ENCODE measurements at regions of chr7 and their contacts with region 1.

Region 1: DNA sequence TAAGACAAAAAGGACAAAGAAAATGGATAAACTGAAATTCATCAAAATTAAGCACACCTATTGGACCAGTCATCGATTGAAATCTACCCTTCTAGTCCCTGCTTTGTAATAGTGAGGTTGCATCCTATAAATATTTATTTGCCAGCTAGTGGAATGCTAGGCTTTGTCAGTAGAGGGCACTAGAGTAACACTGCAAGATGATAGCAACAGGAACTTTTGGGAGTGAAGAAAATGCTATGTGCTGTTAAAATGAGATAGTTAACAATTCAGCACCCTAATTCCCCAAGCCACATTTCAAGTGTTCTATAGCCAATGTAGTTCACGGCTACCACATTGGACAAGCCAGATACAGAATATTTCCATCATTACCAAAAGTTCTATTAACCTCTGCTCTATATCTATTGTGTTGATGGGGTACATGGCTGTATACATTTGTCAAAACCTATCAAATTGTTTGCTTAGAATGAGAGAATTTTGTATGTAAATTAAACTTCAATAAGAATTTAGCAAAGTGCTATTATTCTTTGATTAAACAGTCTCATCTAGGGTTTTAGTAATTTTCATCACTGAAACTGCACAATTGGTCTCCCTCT is 69.8 kb downstream of the LSMEM1 start:
- DNase-seq: peak; percentile 71
- ATAC-seq: peak; percentile 87
- H3K4me3 ChIP-seq: no peak overlapping the region
- H3K27ac ChIP-seq: no peak overlapping the region
- H3K4me1 ChIP-seq: no peaks in the 10 kb centered on the region
- H3K27me3 ChIP-seq: no peaks in the 10 kb centered on the region; the same call in 1 of the 2 replicates
- CTCF ChIP-seq: peak; percentile 94
- POLR2A ChIP-seq: 0 out of 2 replicates have a peak, but pooled peaks have one; percentile 39
- RAD21 ChIP-seq: peak; percentile 96

Region 2: GRCh38 chr7:111741811-111742240 is 808.7 kb before region 1 on chr7:
- CTCF ChIA-PET with region 1: no interaction called
- POLR2A ChIA-PET with region 1: no interaction called
- dilution Hi-C with region 1: no loop called
- in situ Hi-C with region 1: no loop called
- intact Hi-C with region 1: loop called (anchors 5 kb)
- DNase-seq: peak; percentile 76
- ATAC-seq: peak; percentile 89
- H3K4me3 ChIP-seq: no peak overlapping the region
- H3K27ac ChIP-seq: no peak overlapping the region
- H3K4me1 ChIP-seq: peaks cover 2% of the 10 kb centered on the region; the same call in 1 of the 2 replicates
- H3K27me3 ChIP-seq: no peaks in the 10 kb centered on the region
- CTCF ChIP-seq: peak; percentile 80
- POLR2A ChIP-seq: no peak
- RAD21 ChIP-seq: peak; percentile 83

Region 3: DNA sequence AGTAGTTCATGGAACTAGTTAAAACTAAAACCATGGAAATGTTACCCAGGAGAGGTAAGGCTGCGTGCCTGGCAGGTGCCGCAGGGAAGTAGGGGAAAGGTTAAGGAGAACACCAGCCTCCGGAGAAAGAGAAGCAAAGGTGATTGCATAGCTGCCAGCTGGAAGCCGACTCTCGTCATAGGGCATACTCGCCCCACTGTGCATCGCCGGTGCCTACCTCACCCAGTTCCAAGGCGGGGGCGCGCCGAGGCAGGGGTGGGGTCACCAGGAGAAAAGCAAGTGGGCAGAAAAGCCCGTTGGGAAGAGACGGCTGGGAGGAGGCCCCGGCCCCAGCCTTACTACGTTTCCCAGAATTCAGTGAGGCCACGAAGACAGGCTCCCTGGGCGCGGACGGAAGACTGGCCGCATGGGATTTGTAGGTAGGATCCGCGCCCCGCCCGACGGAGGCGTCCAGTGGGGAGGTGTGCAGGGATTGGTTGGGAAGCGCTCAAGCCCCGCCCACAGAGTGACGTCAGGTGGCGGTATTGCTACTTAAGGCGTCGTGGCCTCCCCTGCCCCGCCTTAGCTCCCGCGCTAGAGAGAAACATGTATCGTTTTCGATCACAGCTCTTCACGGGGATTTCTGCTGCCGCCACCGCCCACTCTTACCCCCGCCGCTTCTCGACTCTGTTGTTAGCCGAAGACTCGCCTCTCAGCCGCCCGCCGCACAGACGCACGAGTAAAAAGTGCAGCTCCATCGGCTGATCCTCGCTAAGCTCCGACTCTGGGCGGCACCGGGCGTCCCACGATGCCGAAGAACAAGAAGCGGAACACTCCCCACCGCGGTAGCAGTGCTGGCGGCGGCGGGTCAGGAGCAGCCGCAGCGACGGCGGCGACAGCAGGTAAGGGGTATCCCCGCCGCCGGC is 100.4 kb before region 1 on chr7 and contains the start of gene IFRD1:
- CTCF ChIA-PET with region 1: no interaction called
- POLR2A ChIA-PET with region 1: no interaction called
- dilution Hi-C with region 1: no loop called
- in situ Hi-C with region 1: no loop called
- intact Hi-C with region 1: no loop called
- DNase-seq: peak; percentile 98
- ATAC-seq: peak; percentile 90
- H3K4me3 ChIP-seq: peak within 1 kb of the TSS; percentile 85
- H3K27ac ChIP-seq: peak within 1 kb of the TSS; percentile 94
- H3K4me1 ChIP-seq: no peaks in the 10 kb centered on the region; the same call in 1 of the 2 replicates
- H3K27me3 ChIP-seq: no peaks in the 10 kb centered on the region
- CTCF ChIP-seq: no peak
- POLR2A ChIP-seq: peak; percentile 100
- RAD21 ChIP-seq: no peak
- total RNA-seq, gene IFRD1: 18.3 and 24.2 TPM in 2 replicates

Region 4: DNA sequence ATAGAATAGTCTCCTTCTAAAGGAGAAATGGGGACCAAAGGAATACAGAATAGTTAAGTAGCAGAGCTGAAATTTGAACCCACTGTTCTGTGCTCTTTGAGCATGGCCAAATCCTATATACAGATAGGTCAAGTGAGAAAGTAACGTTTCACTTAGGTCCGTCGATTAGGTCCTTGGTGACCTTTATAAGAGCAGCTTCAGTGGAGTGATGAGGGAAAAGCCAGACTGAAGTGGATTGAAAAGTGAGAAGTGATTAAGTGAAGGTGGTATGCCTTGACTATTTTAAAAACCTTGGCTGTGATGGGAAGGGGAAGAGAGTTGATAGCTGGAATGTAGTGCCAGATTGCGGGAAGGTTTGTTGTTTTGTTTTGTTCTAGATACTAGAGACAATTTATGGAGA is 80.4 kb before region 1 on chr7:
- CTCF ChIA-PET with region 1: no interaction called
- POLR2A ChIA-PET with region 1: no interaction called
- dilution Hi-C with region 1: no loop called
- in situ Hi-C with region 1: no loop called
- intact Hi-C with region 1: no loop called
- DNase-seq: no peak
- ATAC-seq: no peak
- H3K4me3 ChIP-seq: no peak overlapping the region
- H3K27ac ChIP-seq: no peak overlapping the region
- H3K4me1 ChIP-seq: no peaks in the 10 kb centered on the region; the same call in 1 of the 2 replicates
- H3K27me3 ChIP-seq: no peaks in the 10 kb centered on the region
- CTCF ChIP-seq: no peak
- POLR2A ChIP-seq: no peak
- RAD21 ChIP-seq: no peak

Region 5: DNA sequence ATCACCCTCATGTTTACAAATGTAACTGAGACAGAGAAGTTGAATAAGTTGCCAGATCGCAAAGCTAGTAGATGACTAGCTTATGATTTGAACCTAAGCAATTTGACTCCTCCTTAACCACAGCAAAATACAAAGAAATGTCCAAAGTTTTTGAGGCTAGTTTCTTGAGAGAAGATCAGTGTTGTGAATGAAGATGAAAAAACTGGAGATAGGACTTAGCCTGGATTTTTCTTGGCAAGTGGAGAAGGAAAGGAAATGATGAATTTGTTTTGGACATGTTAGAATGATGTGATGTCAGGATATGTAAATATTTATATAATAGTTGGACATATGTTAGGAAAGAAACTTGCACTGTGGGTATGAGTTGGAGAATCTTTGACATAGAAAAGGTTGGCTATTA is 80.0 kb after region 1 on chr7:
- CTCF ChIA-PET with region 1: no interaction called
- POLR2A ChIA-PET with region 1: no interaction called
- dilution Hi-C with region 1: no loop called
- in situ Hi-C with region 1: no loop called
- intact Hi-C with region 1: no loop called
- DNase-seq: peak; percentile 27
- ATAC-seq: peak; percentile 62
- H3K4me3 ChIP-seq: no peak overlapping the region
- H3K27ac ChIP-seq: no peak overlapping the region
- H3K4me1 ChIP-seq: no peaks in the 10 kb centered on the region
- H3K27me3 ChIP-seq: no peaks in the 10 kb centered on the region
- CTCF ChIP-seq: no peak
- POLR2A ChIP-seq: no peak
- RAD21 ChIP-seq: no peak

Region 6: DNA sequence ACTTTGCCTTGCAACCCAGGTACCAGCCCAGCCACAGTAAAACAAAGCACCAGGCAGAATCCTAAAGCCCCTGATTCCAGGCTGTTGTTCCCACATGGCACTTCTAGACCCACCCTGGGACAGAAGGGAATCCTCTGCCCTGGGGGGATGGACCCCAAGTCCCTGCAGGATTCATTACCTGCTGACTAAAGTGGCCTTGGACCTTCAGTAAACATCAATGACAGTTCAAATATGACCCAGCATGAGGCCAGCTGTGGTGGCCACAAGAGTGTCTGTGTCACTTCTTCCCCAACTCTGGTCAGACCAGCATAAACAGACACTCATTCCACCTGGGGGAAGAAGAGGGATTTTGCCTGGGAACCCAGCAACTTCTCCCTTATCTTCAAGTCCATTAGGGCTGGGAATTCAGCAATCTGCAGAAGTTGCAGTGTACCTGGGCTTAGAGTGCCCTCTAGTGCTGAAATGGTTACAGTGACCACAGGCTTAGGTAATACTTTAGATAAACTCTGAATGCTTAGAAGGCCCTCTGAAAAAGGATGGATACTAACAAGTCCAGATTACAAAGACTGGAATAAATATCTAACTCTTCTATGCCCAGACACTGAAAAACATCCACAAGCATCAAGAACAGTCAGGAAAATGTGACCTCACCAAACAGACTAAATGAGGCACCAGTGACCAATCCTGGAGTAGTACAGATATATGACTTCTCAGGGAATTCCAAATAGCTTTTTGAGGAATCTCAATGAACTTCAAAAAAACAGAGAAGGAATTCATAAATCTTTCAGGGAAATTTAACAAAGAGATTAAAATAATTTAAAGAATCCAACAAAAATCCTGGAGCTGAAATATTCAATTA is 348.1 kb after region 1 on chr7:
- CTCF ChIA-PET with region 1: interaction called, 3 read pairs
- POLR2A ChIA-PET with region 1: no interaction called
- dilution Hi-C with region 1: no loop called
- in situ Hi-C with region 1: loop called (anchors 10 kb)
- intact Hi-C with region 1: loop called (anchors 1 kb)
- DNase-seq: peak; percentile 76
- ATAC-seq: peak; percentile 96
- H3K4me3 ChIP-seq: no peak overlapping the region
- H3K27ac ChIP-seq: no peak overlapping the region
- H3K4me1 ChIP-seq: no peaks in the 10 kb centered on the region
- H3K27me3 ChIP-seq: no peaks in the 10 kb centered on the region
- CTCF ChIP-seq: peak; percentile 88
- POLR2A ChIP-seq: no peak
- RAD21 ChIP-seq: peak; percentile 94

Region 7: GRCh38 chr7:113015032-113015645 is 464.6 kb after region 1 on chr7:
- CTCF ChIA-PET with region 1: interaction called, 3 read pairs
- POLR2A ChIA-PET with region 1: no interaction called
- dilution Hi-C with region 1: no loop called
- in situ Hi-C with region 1: no loop called
- intact Hi-C with region 1: loop called (anchors 2 kb)
- DNase-seq: peak; percentile 60
- ATAC-seq: peak; percentile 53
- H3K4me3 ChIP-seq: no peak overlapping the region
- H3K27ac ChIP-seq: no peak overlapping the region
- H3K4me1 ChIP-seq: peaks cover 2% of the 10 kb centered on the region; the same call in 1 of the 2 replicates
- H3K27me3 ChIP-seq: no peaks in the 10 kb centered on the region
- CTCF ChIP-seq: peak; percentile 65
- POLR2A ChIP-seq: no peak
- RAD21 ChIP-seq: peak; percentile 72

Region 8: GRCh38 chr7:113232885-113233284 is 682.3 kb after region 1 on chr7:
- CTCF ChIA-PET with region 1: no interaction called
- POLR2A ChIA-PET with region 1: no interaction called
- dilution Hi-C with region 1: no loop called
- in situ Hi-C with region 1: no loop called
- intact Hi-C with region 1: no loop called
- DNase-seq: no peak
- ATAC-seq: no peak
- H3K4me3 ChIP-seq: no peak overlapping the region
- H3K27ac ChIP-seq: no peak overlapping the region
- H3K4me1 ChIP-seq: no peaks in the 10 kb centered on the region
- H3K27me3 ChIP-seq: no peaks in the 10 kb centered on the region
- CTCF ChIP-seq: no peak
- POLR2A ChIP-seq: no peak
- RAD21 ChIP-seq: no peak

Region 9: DNA sequence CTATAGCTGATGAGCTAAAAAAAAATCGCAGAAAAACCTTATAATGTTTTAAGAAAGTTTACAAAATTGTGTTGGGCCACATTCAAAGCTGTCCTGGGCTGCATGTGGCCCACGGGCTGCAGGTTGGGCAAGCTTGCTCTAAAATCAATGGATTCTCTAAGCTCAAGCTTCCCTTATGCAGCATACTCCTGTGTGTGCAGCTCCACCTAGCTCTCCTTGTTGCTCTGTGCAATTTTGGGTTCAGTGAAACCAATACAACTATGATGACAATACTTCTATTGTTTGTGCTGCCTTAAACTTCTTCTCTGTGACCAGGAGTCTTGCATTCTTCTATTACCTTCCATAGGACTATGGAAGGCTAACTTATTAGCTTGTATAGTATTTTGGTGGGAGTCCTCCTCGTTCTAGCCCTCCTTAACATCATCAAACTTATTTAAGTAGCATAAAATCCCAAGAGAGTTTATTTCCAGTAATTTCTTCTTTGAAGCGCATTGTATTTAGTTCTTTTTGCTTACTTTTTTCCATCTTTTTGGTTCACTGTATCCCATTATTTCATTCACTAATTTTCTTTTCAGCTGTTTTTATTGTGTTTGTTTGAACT is 738.7 kb after region 1 on chr7:
- CTCF ChIA-PET with region 1: no interaction called
- POLR2A ChIA-PET with region 1: no interaction called
- dilution Hi-C with region 1: no loop called
- in situ Hi-C with region 1: no loop called
- intact Hi-C with region 1: loop called (anchors 1 kb)
- DNase-seq: peak; percentile 71
- ATAC-seq: peak; percentile 95
- H3K4me3 ChIP-seq: no peak overlapping the region
- H3K27ac ChIP-seq: no peak overlapping the region
- H3K4me1 ChIP-seq: no peaks in the 10 kb centered on the region
- H3K27me3 ChIP-seq: no peaks in the 10 kb centered on the region
- CTCF ChIP-seq: peak; percentile 67
- POLR2A ChIP-seq: no peak
- RAD21 ChIP-seq: peak; percentile 78

Region 10: GRCh38 chr7:113698556-113699220 is 1148.1 kb after region 1 on chr7:
- CTCF ChIA-PET with region 1: no interaction called
- POLR2A ChIA-PET with region 1: no interaction called
- dilution Hi-C with region 1: no loop called
- in situ Hi-C with region 1: loop called (anchors 25 kb)
- intact Hi-C with region 1: loop called (anchors 2 kb)
- DNase-seq: peak; percentile 39
- ATAC-seq: peak; percentile 70
- H3K4me3 ChIP-seq: no peak overlapping the region
- H3K27ac ChIP-seq: no peak overlapping the region
- H3K4me1 ChIP-seq: no peaks in the 10 kb centered on the region
- H3K27me3 ChIP-seq: no peaks in the 10 kb centered on the region
- CTCF ChIP-seq: peak; percentile 70
- POLR2A ChIP-seq: no peak
- RAD21 ChIP-seq: peak; percentile 56

Measured in IMR-90 (cell line).